ENCODE measurements at regions of chr9 and their contacts with region 1.

Region 1: GRCh38 chr9:93962561-93963440 is 7.6 kb upstream of the BARX1 start:
- DNase-seq: peak; percentile 81
- H3K4me3 ChIP-seq: no peak overlapping the region
- H3K27ac ChIP-seq: no peak overlapping the region
- H3K4me1 ChIP-seq: peaks cover 2% of the 10 kb centered on the region
- H3K27me3 ChIP-seq: peaks cover 22% of the 10 kb centered on the region
- CTCF ChIP-seq: peak; percentile 74 to 87 (median 84)
- POLR2A ChIP-seq: no peak

Region 2: GRCh38 chr9:93193148-93193755 is 769.5 kb before region 1 on chr9:
- intact Hi-C with region 1: no loop called
- DNase-seq: peak; percentile 46
- H3K4me3 ChIP-seq: no peak overlapping the region
- H3K27ac ChIP-seq: peak overlapping the region in 1 of 2 donors; percentile 14
- H3K4me1 ChIP-seq: peaks cover 15% of the 10 kb centered on the region
- H3K27me3 ChIP-seq: no peaks in the 10 kb centered on the region
- CTCF ChIP-seq: peak in 2 of 4 experiments; percentile 33 to 34
- POLR2A ChIP-seq: no peak

Region 3: GRCh38 chr9:93682232-93682968 is 280.4 kb before region 1 on chr9:
- intact Hi-C with region 1: loop called (anchors 1 kb)
- DNase-seq: peak; percentile 34
- H3K4me3 ChIP-seq: no peak overlapping the region
- H3K27ac ChIP-seq: no peak overlapping the region
- H3K4me1 ChIP-seq: no peaks in the 10 kb centered on the region
- H3K27me3 ChIP-seq: no peaks in the 10 kb centered on the region
- CTCF ChIP-seq: peak; percentile 69 to 82 (median 73)
- POLR2A ChIP-seq: no peak

Region 4: GRCh38 chr9:94030318-94031179 is 67.7 kb after region 1 on chr9:
- intact Hi-C with region 1: no loop called
- DNase-seq: peak; percentile 86
- H3K4me3 ChIP-seq: peak overlapping the region; percentile 88 to 90
- H3K27ac ChIP-seq: peak overlapping the region; percentile 79 to 81
- H3K4me1 ChIP-seq: no peaks in the 10 kb centered on the region
- H3K27me3 ChIP-seq: no peaks in the 10 kb centered on the region
- CTCF ChIP-seq: peak in 1 of 4 experiments; percentile 6
- POLR2A ChIP-seq: peak; percentile 81